ENCODE measurements at regions of chr20 and their contacts with region 1.

Region 1: GRCh38 chr20:3820048-3820900 is at the start of gene AP5S1:
- DNase-seq: peak; percentile 99
- ATAC-seq: peak; percentile 84
- H3K4me3 ChIP-seq: peak within 1 kb of the TSS; percentile 62 to 85 (median 75)
- H3K4me3 Mint-ChIP-seq: peak within 1 kb of the TSS; percentile 97
- H3K27ac ChIP-seq: peak within 1 kb of the TSS; percentile 97 to 98
- H3K27ac Mint-ChIP-seq: peak within 1 kb of the TSS; percentile 100
- H3K4me1 ChIP-seq: peaks cover 13 to 15% of the 10 kb centered on the region in 2 donors
- H3K4me1 Mint-ChIP-seq: peaks cover 15% of the 10 kb centered on the region
- H3K27me3 ChIP-seq: no peaks in the 10 kb centered on the region
- H3K27me3 Mint-ChIP-seq: no peaks in the 10 kb centered on the region
- CTCF ChIP-seq: peak; percentile 97
- total RNA-seq, gene AP5S1: 12.6 and 12.8 TPM in 2 replicates

Region 2: GRCh38 chr20:3473944-3474343 is 346.3 kb before region 1 on chr20:
- CTCF ChIA-PET with region 1: no interaction called
- POLR2A ChIA-PET with region 1: no interaction called
- intact Hi-C with region 1: no loop called
- DNase-seq: no peak
- ATAC-seq: no peak
- H3K4me3 ChIP-seq: no peak overlapping the region
- H3K4me3 Mint-ChIP-seq: no peak overlapping the region
- H3K27ac ChIP-seq: no peak overlapping the region
- H3K27ac Mint-ChIP-seq: no peak overlapping the region
- H3K4me1 ChIP-seq: peaks cover 25 to 35% of the 10 kb centered on the region in 2 donors
- H3K4me1 Mint-ChIP-seq: peaks cover 40% of the 10 kb centered on the region
- H3K27me3 ChIP-seq: no peaks in the 10 kb centered on the region
- H3K27me3 Mint-ChIP-seq: no peaks in the 10 kb centered on the region
- CTCF ChIP-seq: no peak

Region 3: GRCh38 chr20:3781153-3781910 is 38.9 kb before region 1 on chr20 and contains the start of gene SPEF1:
- CTCF ChIA-PET with region 1: interaction called, 84 read pairs
- POLR2A ChIA-PET with region 1: interaction called, 10 read pairs
- intact Hi-C with region 1: loop called (anchors 1 kb)
- DNase-seq: peak; percentile 78
- ATAC-seq: peak; percentile 64
- H3K4me3 ChIP-seq: peak within 1 kb of the TSS in 3 of 5 experiments; percentile 36 to 49 (median 38)
- H3K4me3 Mint-ChIP-seq: peak within 1 kb of the TSS; percentile 79
- H3K27ac ChIP-seq: no peak within 1 kb of the TSS
- H3K27ac Mint-ChIP-seq: peak within 1 kb of the TSS; percentile 32
- H3K4me1 ChIP-seq: peaks cover 29 to 45% of the 10 kb centered on the region in 2 donors
- H3K4me1 Mint-ChIP-seq: peaks cover 52% of the 10 kb centered on the region
- H3K27me3 ChIP-seq: peaks cover 0 to 15% (median 4%) of the 10 kb centered on the region in 4 experiments
- H3K27me3 Mint-ChIP-seq: no peaks in the 10 kb centered on the region
- CTCF ChIP-seq: no peak
- total RNA-seq, gene SPEF1: not detected in 2 replicates

Region 4: GRCh38 chr20:3795511-3796468 is 24.5 kb before region 1 on chr20 and contains the start of gene CDC25B:
- CTCF ChIA-PET with region 1: interaction called, 15 read pairs
- POLR2A ChIA-PET with region 1: interaction called, 16 read pairs
- intact Hi-C with region 1: loop called (anchors 1 kb)
- DNase-seq: peak; percentile 89
- ATAC-seq: peak; percentile 76
- H3K4me3 ChIP-seq: peak within 1 kb of the TSS; percentile 64 to 100 (median 90)
- H3K4me3 Mint-ChIP-seq: peak within 1 kb of the TSS; percentile 97
- H3K27ac ChIP-seq: peak within 1 kb of the TSS; percentile 93 to 97
- H3K27ac Mint-ChIP-seq: peak within 1 kb of the TSS; percentile 98
- H3K4me1 ChIP-seq: peaks cover 47 to 52% of the 10 kb centered on the region in 2 donors
- H3K4me1 Mint-ChIP-seq: peaks cover 49% of the 10 kb centered on the region
- H3K27me3 ChIP-seq: no peaks in the 10 kb centered on the region
- H3K27me3 Mint-ChIP-seq: no peaks in the 10 kb centered on the region
- CTCF ChIP-seq: peak; percentile 39
- total RNA-seq, gene CDC25B: 72.3 and 77.3 TPM in 2 replicates

Region 5: GRCh38 chr20:3854462-3854871 is 34.2 kb after region 1 on chr20:
- CTCF ChIA-PET with region 1: interaction called, 19 read pairs
- POLR2A ChIA-PET with region 1: interaction called, 3 read pairs
- intact Hi-C with region 1: loop called (anchors 2 kb)
- DNase-seq: no peak
- ATAC-seq: no peak
- H3K4me3 ChIP-seq: no peak overlapping the region
- H3K4me3 Mint-ChIP-seq: no peak overlapping the region
- H3K27ac ChIP-seq: no peak overlapping the region
- H3K27ac Mint-ChIP-seq: peak overlapping the region; percentile 26
- H3K4me1 ChIP-seq: no peaks in the 10 kb centered on the region
- H3K4me1 Mint-ChIP-seq: peaks cover 6% of the 10 kb centered on the region
- H3K27me3 ChIP-seq: no peaks in the 10 kb centered on the region
- H3K27me3 Mint-ChIP-seq: no peaks in the 10 kb centered on the region
- CTCF ChIP-seq: no peak

Region 6: DNA sequence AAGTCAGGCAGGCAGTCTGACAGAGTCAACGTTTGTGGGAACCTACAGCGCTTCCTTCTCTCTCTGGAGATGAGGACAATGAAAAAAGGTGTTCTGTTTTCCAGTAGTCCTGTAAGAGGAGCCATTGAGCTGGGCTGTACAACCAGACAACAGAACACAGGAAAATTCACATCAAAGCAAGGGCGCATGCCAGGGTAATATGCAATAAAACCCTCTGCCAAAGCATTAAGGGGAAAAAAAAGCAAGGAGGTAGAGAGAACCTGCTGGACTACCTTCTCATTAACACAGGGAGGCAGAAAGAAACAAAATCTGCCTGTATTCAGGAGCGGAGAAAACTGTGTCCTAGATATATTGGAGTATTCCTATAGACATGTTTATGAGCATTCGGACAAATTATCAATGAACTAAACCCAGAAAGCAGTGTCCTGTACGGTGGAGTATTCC is 193.8 kb after region 1 on chr20:
- CTCF ChIA-PET with region 1: no interaction called
- POLR2A ChIA-PET with region 1: no interaction called
- intact Hi-C with region 1: loop called (anchors 1 kb)
- DNase-seq: peak; percentile 55
- ATAC-seq: no peak
- H3K4me3 ChIP-seq: peak overlapping the region in 1 of 5 experiments; percentile 69
- H3K4me3 Mint-ChIP-seq: peak overlapping the region; percentile 78
- H3K27ac ChIP-seq: no peak overlapping the region
- H3K27ac Mint-ChIP-seq: peak overlapping the region; percentile 2
- H3K4me1 ChIP-seq: peaks cover 14 to 30% of the 10 kb centered on the region in 2 donors
- H3K4me1 Mint-ChIP-seq: peaks cover 28% of the 10 kb centered on the region
- H3K27me3 ChIP-seq: no peaks in the 10 kb centered on the region
- H3K27me3 Mint-ChIP-seq: no peaks in the 10 kb centered on the region
- CTCF ChIP-seq: peak; percentile 25